ENCODE measurements at regions of chr5 and their contacts with region 1.

Region 1: DNA sequence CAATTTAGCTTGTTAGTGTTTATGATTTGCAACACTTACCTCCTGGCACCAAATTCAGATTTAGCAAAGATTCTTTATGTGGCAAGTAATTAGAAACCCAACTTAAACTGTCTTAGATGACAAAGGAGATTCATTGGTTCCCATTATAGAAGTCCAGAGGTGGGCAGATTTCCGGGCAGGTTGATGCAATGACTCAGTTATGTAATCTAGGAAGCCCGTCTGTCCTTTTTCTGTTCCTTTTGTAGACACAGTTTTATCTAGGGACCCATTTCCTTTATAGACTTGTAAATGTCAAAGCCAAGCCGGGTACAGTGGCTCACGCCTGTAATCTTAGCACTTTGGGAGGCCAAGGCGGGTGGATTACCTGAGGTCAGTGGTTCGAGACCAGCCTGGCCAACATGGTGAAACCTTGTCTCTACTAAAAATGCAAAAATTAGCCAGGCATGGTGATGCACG is 20.3 kb upstream of the ANKRD33B start:
- DNase-seq: peak in 1 of 10 donors; percentile 32
- H3K4me3 ChIP-seq: no peak overlapping the region
- H3K27ac ChIP-seq: peak overlapping the region in 33 of 59 donors; percentile 2 to 80 (median 38)
- H3K27me3 ChIP-seq: no peaks in the 10 kb centered on the region
- CTCF ChIP-seq: no peak

Region 2: GRCh38 chr5:10579536-10580521 is 36.2 kb after region 1 on chr5:
- intact Hi-C with region 1: loop called in 1 of 2 experiments (anchors 2 kb)
- DNase-seq: peak in 2 of 10 donors; percentile 5 to 15
- H3K4me3 ChIP-seq: no peak overlapping the region
- H3K27ac ChIP-seq: peak overlapping the region in 8 of 59 donors; percentile 9 to 81 (median 62)
- H3K27me3 ChIP-seq: no peaks in the 10 kb centered on the region
- CTCF ChIP-seq: no peak

Measured in dorsolateral prefrontal cortex (tissue), 120 donors.